ENCODE measurements at regions of chr17 and their contacts with region 1.

Region 1: DNA sequence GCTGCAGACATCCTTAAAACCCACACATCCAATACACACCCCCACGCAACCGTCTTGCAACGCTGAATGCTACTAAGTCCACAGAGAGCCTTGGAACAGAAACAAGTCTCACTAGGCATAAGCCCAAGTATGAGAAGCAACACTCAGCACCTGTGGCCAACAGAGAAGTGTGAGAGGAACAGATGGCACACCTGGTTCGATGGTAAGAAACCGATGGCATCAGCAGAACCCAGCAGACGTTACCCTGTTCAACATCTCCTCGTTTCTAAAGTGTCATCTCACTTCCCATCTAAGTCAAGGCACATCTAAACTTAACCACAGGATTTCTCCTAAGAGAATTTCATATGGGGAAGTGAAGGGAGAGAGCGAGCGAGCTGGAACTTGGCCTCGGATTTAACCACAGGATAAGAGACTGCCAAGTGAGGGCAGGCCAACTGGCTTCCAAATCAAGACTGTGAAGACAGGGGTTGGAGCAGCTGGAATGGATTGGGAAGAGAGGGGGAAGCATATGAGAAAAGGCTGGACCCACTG is 41.0 kb downstream of the NXPH3 start:
- DNase-seq: peak; percentile 80

Region 2: DNA sequence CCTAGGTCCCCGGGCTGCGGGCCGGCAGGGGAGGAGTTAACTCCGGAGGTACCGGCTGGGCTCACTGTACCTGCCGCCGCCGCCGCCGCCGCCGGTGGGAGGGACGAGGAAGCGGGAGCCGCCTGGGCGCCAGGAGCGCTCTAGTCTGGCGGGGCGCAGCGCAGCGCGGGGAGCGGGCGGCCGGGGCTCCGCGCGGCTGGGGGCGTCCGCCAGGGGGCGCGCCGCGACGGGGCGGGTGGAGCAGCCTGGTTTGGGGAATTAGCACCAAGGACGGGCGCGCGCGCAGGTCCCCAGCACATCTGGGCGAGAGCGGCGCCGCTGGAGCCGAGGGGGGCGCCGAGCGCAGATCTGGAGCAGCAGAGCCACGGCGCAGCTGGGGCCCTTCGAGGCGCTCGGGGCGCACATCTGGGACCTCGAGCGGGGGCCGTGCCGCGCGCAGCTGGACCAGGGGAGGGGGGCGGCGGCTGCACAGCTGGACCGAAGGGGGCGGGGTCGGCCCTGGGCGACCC is 41.0 kb before region 1 on chr17 and contains the start of gene NXPH3:
- intact Hi-C with region 1: loop called (anchors 5 kb)
- DNase-seq: peak; percentile 88
- total RNA-seq, gene NXPH3: 4.4 TPM

Region 3: GRCh38 chr17:49646391-49647255 is 30.0 kb after region 1 on chr17:
- intact Hi-C with region 1: loop called (anchors 5 kb)
- DNase-seq: no peak

Region 4: DNA sequence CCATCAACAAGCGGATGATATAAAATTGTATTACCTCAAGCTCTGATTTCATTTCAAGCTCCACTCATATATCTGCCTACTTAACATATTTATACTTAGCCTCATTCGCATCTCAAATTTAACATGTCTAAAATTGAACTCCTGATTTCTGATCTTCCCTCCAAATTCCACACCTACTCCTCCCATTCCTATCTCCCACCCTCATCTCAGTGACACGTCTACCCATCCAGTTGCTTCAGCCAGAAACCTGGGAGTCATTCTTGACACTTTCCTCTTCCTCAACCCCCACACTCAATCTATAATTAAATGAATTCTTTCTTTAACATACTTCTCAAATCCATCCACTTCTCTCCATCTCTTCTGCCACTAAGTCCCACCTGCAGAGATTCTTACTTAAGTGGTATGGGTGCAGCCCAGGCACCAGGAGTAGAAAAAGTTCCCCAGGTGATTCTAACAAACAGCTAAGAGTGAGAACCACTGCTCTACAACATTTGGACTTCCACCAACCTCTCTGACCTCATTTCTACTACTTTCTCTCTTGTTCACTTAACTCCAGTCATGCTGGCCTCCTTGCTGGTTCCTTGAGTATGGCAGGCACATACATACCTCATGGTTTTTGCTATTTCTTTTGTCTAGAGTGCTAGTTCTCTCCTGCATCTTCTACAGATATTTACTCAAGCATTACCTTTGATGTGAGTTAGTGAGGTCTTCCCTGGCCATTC is 43.2 kb after region 1 on chr17:
- intact Hi-C with region 1: no loop called
- DNase-seq: no peak

Measured in cardiac septum (tissue), 1 donor.